Astrocyte of the cerebellum (primary cell): ENCODE measurements at regions of chr9 and their contacts with region 1.

Region 1: GRCh38 chr9:75644649-75645048 is 245.8 kb upstream of the PCSK5 start:
- DNase-seq: no peak
- H3K4me3 ChIP-seq: no peak overlapping the region
- CTCF ChIP-seq: no peak

Region 2: GRCh38 chr9:75601279-75601678 is 43.4 kb before region 1 on chr9:
- in situ Hi-C with region 1: no loop called
- DNase-seq: no peak
- H3K4me3 ChIP-seq: no peak overlapping the region
- CTCF ChIP-seq: no peak

Region 3: DNA sequence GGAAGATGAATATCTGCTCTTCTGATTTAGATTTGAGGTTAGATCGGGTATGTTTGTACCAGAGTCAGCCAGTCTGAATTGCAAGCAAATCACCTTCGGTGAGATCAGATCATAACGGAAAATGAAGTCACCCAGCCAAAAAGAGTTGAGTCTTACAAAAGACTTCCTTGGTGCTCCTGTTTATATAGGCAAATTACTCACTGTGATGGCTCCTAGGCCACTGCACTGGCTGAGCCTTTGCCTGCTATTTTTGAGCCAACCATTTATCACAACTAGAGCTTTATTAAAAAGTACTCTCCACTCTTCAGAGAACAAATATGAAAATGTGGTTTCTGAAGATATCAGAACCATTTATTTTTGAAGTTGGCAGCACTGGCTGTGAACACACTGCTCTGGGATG is 31.9 kb before region 1 on chr9:
- in situ Hi-C with region 1: loop called (anchors 5 kb)
- DNase-seq: no peak
- H3K4me3 ChIP-seq: no peak overlapping the region
- CTCF ChIP-seq: no peak

Region 4: GRCh38 chr9:75692309-75692708 is 47.7 kb after region 1 on chr9:
- in situ Hi-C with region 1: loop called (anchors 5 kb)
- DNase-seq: no peak
- H3K4me3 ChIP-seq: no peak overlapping the region
- CTCF ChIP-seq: no peak